ENCODE measurements at regions of chr9 and their contacts with region 1.

Region 1: DNA sequence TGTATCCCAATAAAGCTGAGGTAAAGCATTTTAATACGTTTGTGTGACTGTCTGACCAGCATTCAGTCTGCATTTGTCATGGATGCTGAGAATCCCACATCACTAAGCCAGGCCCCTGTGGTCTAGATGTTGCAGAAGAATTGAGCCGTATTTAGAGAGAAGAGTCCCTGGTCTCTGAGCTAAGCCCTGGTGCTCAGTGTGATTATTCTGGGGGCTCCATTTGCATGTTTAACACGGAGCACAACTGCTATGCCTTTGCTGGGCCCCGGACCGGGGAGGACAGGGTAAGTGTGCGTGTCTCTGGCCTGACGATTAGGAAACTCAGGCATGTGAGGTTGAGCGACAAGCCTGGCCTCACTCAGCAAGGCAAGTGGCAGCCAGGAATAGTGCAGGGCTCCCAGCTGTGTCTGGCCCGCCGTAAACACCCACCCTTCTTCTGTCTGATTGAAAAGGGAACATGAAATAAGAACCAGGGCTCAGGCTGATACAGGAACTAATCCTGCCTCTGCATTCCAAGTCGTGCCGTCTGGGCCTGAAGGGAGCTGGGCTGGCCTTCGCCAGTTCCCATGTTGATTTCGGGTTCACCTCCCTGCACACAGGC is 22.3 kb downstream of the FAM78A start:
- DNase-seq: no peak
- H3K4me3 Mint-ChIP-seq: peak overlapping the region; percentile 34
- H3K27ac Mint-ChIP-seq: peak overlapping the region; percentile 97
- H3K4me1 Mint-ChIP-seq: peaks cover 75% of the 10 kb centered on the region
- H3K27me3 Mint-ChIP-seq: no peaks in the 10 kb centered on the region

Region 2: DNA sequence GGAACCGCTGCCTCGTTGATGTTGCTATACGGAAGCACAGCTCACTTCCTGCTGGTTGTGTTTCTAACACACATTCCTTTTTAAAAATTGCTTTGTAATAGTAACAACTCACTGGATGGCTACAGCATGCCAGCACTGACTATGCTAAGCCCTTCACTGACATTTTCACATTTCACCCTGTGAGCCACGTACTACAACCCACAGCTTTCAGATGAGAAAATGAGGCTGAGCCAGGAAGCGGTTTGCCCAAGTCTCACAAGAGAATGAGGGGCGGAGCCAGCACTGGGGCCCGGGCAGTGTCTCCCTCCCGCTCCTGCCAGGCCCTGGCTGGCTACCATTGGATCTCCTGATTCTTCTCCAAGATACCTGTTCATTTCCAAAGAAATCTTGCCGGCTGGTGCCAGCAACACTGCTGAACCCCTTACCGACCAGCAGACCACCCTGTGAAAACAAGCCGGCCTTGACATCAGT is 16.0 kb before region 1 on chr9:
- CTCF ChIA-PET with region 1: interaction called, 10 read pairs
- POLR2A ChIA-PET with region 1: interaction called, 9 read pairs
- DNase-seq: peak; percentile 92
- H3K4me3 Mint-ChIP-seq: peak overlapping the region; percentile 60
- H3K27ac Mint-ChIP-seq: peak overlapping the region; percentile 93
- H3K4me1 Mint-ChIP-seq: peaks cover 52% of the 10 kb centered on the region
- H3K27me3 Mint-ChIP-seq: no peaks in the 10 kb centered on the region

Region 3: DNA sequence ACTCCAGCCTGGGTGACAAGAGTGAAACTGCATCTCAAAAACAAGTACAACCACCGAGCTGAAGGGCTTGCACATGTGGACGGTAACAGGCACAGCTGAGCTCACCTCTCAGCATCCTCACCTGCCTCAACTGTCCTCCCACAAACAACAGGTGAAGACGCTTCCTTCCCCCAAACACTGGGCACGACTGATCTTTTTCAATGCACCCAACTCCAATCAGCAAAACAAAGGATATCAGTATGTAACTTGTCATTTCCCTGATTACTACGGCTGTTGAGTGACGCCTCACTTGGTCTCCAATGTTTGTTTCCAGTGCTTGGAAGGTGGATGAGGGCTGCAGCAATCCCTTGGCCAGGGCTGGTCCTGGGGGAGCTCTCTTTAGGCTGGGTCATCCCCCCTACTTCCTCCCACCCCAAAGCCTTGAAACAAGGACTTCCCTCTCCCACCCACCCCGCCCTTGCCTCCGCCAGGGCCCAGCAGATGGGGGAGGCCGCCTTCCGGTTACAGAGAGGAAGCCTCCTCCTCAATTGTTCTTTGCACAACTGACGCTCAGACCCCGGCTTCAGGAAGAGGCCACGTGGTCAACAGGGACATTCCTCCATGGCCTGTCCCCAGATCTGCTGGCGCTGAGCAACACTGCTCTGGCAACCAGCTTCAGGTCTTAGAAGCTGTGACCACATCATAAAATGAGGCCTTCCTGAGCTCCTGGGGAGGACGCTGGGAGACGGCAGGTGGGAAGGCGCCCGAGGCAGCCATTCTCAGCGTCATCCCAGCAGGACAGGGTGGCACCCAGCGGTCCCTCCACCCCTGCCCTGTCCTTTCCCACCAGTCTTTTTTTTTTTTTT is 16.4 kb after region 1 on chr9:
- CTCF ChIA-PET with region 1: interaction called, 74 read pairs
- POLR2A ChIA-PET with region 1: interaction called, 25 read pairs
- DNase-seq: peak; percentile 68
- H3K4me3 Mint-ChIP-seq: peak overlapping the region; percentile 96
- H3K27ac Mint-ChIP-seq: peak overlapping the region; percentile 99
- H3K4me1 Mint-ChIP-seq: peaks cover 58% of the 10 kb centered on the region
- H3K27me3 Mint-ChIP-seq: no peaks in the 10 kb centered on the region

Measured in activated CD4-positive, alpha-beta T cell treated with anti-CD3 and anti-CD28 coated beads, Interleukin-2, amount 10 ng/mL, durations not matched to agents 7 days and 5 days (primary cell).